Dendritic cell treated with granulocyte-macrophage colony-stimulating factor and Interleukin-4, amounts not matched to agents 40 ng/mL and 50 ng/mL, for 4 days (primary cell): ENCODE measurements at regions of chr5 and their contacts with region 1.

Region 1: DNA sequence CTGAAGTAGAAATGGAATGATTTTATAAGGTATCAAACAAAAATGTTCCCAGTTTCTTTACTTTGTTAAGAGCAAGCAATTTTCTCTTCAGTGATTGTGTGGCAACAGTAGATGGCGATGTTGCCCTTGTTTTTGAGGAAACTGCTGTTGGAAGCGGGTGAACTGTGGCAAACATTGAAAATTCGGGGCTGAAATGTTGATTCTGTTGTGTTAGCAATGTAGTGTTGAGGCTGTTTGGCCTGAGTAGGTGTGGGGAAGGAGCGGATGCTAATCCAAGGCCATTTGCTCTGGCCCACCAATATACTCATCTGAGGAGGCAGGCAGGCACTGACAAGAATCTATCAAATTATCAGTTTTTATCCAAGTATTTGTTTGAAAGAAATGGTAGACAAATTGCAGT is 129.8 kb downstream of the SLC12A2 start:
- H3K4me3 Mint-ChIP-seq: no peak overlapping the region
- H3K27ac Mint-ChIP-seq: no peak overlapping the region
- H3K4me1 Mint-ChIP-seq: no peaks in the 10 kb centered on the region
- H3K27me3 Mint-ChIP-seq: no peaks in the 10 kb centered on the region

Region 2: DNA sequence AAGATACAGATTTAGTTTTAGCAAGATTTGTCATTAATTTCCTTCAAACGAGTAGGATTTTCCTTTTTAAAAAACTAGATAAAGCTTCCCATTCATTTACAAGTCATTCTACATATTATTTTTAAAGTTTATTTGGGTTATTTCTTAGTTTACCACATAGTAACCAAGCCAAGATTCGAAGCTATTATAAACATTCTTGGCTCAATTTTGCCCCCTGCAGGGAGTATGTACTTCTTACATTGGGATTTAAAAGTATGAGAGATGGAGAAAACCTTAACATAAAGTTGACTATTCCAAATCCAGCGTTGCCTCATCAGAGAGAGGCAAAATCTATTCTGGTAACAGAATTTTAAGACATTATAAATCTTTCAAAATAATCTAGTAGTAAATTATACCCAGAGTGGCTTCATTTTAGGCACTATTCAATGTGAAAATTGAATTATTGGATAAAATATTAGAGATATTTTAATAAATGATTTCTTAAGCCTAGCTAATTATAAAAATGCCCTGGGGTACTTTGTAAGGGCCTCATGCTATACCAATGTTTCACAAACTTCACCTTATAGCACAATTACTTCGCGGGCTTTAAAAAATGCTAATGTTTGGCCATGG is 285.6 kb after region 1 on chr5:
- intact Hi-C with region 1: loop called (anchors 1 kb)
- H3K4me3 Mint-ChIP-seq: no peak overlapping the region
- H3K27ac Mint-ChIP-seq: no peak overlapping the region
- H3K4me1 Mint-ChIP-seq: no peaks in the 10 kb centered on the region
- H3K27me3 Mint-ChIP-seq: no peaks in the 10 kb centered on the region

Region 3: GRCh38 chr5:128674825-128675446 is 461.6 kb after region 1 on chr5:
- intact Hi-C with region 1: loop called (anchors 1 kb)
- H3K4me3 Mint-ChIP-seq: no peak overlapping the region
- H3K27ac Mint-ChIP-seq: no peak overlapping the region
- H3K4me1 Mint-ChIP-seq: no peaks in the 10 kb centered on the region
- H3K27me3 Mint-ChIP-seq: no peaks in the 10 kb centered on the region

Region 4: DNA sequence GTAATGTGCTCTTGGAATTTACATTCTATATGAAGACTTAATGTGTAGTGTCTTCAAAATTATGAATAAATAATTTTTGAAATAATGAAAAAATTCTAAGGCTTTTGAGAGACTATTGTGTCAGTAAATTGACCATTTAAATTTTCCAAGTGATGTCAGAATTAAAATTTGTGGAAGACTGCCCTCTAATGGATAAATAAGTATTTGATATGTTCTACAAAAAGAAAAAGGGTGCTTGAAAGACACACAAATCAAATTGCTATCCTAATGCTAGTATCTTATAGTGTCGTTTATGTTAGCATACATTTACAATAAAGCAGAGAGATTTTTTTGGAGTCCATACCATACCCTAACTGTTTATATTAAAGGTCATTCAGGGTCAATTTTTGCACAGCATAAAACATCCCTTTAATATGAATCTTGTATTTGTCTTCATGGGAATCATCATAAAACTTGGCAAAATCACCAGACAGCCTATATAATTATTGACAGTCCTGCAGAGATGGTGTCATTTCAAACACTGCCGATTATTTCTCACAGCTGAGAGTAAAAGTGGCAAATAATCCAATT is 631.1 kb after region 1 on chr5:
- intact Hi-C with region 1: loop called (anchors 10 kb)
- H3K4me3 Mint-ChIP-seq: no peak overlapping the region
- H3K27ac Mint-ChIP-seq: no peak overlapping the region
- H3K4me1 Mint-ChIP-seq: no peaks in the 10 kb centered on the region
- H3K27me3 Mint-ChIP-seq: no peaks in the 10 kb centered on the region